RWPE1 (cell line): ENCODE measurements at regions of chr2 and their contacts with region 1.

Region 1: GRCh38 chr2:102240640-102241370 is 54.0 kb downstream of the IL1RL2 start:
- DNase-seq: peak; percentile 69
- H3K27ac ChIP-seq: no peak overlapping the region
- CTCF ChIP-seq: peak; percentile 96

Region 2: DNA sequence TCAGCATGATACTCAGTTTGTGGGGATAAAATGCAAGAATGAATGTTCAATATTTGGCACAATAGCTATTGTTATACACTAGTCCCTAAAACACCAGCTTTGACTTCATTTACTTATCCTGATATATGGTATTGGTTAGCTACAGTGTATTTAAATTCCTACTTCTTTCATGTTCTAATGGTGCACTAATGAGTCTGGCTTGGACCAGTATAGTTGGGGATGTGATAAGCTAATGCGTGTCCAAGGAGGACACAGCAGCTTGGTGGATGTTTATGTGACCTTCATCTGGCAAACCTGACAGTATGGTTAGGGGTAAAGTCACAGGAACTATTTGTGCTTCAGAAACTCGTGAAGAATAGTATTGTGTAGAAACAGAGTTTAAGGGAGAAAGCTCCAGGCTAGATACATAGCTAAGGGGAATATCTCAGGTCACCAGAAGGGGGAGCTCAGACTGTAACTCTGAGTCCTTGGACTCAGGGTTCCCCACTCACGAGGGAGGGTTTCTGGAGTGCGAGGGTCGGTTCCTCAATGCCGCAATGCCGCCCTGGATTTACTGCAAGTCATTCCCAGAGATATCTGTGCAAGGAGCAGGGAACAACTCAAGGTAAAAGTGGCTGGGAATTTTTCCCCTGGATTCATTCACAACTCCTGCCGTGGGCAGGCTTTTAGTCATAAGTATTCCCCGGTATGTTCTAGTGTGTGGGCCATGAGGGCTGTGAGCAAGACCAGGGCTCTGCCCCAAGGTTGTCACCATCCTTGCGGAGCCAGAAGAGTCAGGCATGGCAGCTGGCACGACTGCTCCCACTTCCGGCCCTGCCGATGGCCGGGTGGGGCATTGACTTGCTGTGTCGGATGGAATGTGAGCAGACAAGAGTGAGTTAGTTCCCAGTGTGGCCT is 234.6 kb before region 1 on chr2:
- CTCF ChIA-PET with region 1: interaction called, 11 read pairs
- POLR2A ChIA-PET with region 1: no interaction called
- DNase-seq: peak; percentile 36
- H3K27ac ChIP-seq: no peak overlapping the region
- CTCF ChIP-seq: peak; percentile 34

Region 3: GRCh38 chr2:102020596-102021181 is 220.1 kb before region 1 on chr2:
- CTCF ChIA-PET with region 1: interaction called, 19 read pairs
- POLR2A ChIA-PET with region 1: no interaction called
- DNase-seq: peak; percentile 74
- H3K27ac ChIP-seq: no peak overlapping the region
- CTCF ChIP-seq: peak; percentile 97

Region 4: DNA sequence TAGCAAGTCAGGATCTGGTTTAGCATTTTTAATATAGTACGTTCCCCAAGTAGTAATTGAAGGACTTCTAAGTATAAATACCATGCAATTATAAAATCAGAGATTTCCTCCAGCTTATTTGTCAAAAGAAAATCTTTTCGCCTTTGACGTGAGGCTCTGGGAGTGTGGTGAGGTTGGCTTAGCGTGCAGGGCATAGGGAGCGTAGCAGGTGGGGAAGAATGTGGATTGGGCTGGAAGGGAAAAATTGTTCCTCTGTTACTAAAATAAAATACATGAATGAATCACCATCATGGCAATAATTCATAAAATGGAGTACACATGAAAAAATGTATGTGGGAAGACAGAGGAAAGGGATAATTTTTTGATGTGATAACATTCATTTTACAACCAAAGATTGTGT is 59.4 kb before region 1 on chr2:
- CTCF ChIA-PET with region 1: no interaction called
- POLR2A ChIA-PET with region 1: no interaction called
- DNase-seq: no peak
- H3K27ac ChIP-seq: no peak overlapping the region
- CTCF ChIP-seq: no peak

Region 5: GRCh38 chr2:102251042-102251848 is 10.4 kb after region 1 on chr2:
- CTCF ChIA-PET with region 1: interaction called, 10 read pairs
- POLR2A ChIA-PET with region 1: no interaction called
- DNase-seq: peak; percentile 30
- H3K27ac ChIP-seq: no peak overlapping the region
- CTCF ChIP-seq: peak; percentile 37; the same call in 1 of the 2 replicates